ENCODE measurements at regions of chr11 and their contacts with region 1.

Region 1: GRCh38 chr11:108222686-108223448 is at the start of gene ATM:
- DNase-seq: peak; percentile 98
- H3K4me3 Mint-ChIP-seq: no peak within 1 kb of the TSS
- H3K27ac Mint-ChIP-seq: no peak within 1 kb of the TSS
- H3K4me1 Mint-ChIP-seq: peaks cover 37% of the 10 kb centered on the region
- H3K27me3 Mint-ChIP-seq: no peaks in the 10 kb centered on the region
- CTCF ChIP-seq: peak; percentile 57
- total RNA-seq, gene ATM: 70.6 and 73.6 TPM in 2 replicates

Region 2: DNA sequence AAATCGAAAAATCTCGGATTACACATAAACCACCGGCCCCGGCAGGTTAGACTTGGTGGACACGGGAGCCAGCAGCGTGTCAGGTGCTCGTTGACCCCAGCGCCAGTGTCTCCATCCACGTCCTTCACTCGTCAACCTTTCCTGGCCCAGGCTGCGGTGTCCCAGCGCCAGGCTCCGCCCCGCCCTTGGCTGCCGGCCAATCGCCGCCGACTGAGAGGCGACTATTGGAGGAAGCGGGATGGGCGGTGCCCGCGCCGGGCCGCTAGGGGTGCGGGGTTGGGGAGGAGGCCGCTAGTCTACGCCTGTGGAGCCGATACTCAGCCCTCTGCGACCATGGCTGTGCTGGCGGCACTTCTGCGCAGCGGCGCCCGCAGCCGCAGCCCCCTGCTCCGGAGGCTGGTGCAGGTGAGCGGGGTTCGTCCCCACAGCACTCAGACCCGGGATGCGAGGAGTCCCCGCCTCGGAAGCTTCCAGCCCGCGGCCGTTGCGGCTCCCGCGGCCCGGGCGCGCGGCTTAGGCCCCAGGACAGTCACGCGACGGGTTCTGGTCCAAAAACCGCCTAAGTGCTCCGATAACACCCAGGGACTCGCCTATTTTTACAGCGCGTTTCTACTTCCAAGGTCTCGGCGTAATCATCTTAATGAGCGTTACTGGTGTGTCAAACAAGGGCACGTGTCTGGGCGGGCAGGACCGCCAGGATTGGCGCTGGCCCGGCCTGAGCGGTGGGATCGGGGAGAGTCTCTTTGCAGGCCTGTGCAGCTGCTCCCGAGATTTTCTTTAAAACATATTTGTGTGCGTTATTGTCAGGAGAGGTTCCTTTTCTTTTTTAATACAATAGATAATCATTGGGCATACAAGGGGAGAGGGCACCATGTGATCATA is 101.4 kb before region 1 on chr11 and contains the start of gene ACAT1:
- CTCF ChIA-PET with region 1: interaction called, 3 read pairs
- POLR2A ChIA-PET with region 1: interaction called, 22 read pairs
- intact Hi-C with region 1: loop called (anchors 2 kb)
- DNase-seq: peak; percentile 95
- H3K4me3 Mint-ChIP-seq: peak within 1 kb of the TSS; percentile 83
- H3K27ac Mint-ChIP-seq: peak within 1 kb of the TSS; percentile 91
- H3K4me1 Mint-ChIP-seq: peaks cover 38% of the 10 kb centered on the region
- H3K27me3 Mint-ChIP-seq: no peaks in the 10 kb centered on the region
- CTCF ChIP-seq: peak; percentile 7
- total RNA-seq, gene ACAT1: 75.5 and 86.8 TPM in 2 replicates

Region 3: GRCh38 chr11:108199446-108200321 is 23.2 kb before region 1 on chr11:
- CTCF ChIA-PET with region 1: no interaction called
- POLR2A ChIA-PET with region 1: interaction called, 25 read pairs
- intact Hi-C with region 1: no loop called
- DNase-seq: peak; percentile 94
- H3K4me3 Mint-ChIP-seq: peak overlapping the region; percentile 58
- H3K27ac Mint-ChIP-seq: peak overlapping the region; percentile 88
- H3K4me1 Mint-ChIP-seq: peaks cover 23% of the 10 kb centered on the region
- H3K27me3 Mint-ChIP-seq: no peaks in the 10 kb centered on the region
- CTCF ChIP-seq: no peak

Region 4: DNA sequence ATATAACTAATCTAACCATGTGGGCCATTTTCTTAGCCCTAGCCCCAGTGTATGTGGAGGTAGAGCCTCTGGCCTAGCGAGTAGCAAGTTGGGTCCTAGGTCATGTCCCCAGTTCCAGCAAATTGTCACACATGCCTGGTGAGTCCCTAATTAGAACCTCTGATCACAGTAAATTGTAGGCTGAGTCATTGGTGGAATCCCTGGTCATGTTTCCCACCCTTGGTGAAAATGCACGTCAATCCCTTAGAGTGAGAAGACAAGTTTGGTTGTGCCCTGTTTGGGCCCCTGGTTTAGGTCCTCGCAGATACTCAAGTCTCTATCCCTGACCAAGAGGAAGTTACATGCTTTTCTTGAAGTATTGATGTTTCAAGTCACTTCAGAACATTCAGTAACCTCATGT is 46.7 kb after region 1 on chr11:
- CTCF ChIA-PET with region 1: no interaction called
- POLR2A ChIA-PET with region 1: no interaction called
- intact Hi-C with region 1: no loop called
- DNase-seq: no peak
- H3K4me3 Mint-ChIP-seq: no peak overlapping the region
- H3K27ac Mint-ChIP-seq: no peak overlapping the region
- H3K4me1 Mint-ChIP-seq: no peaks in the 10 kb centered on the region
- H3K27me3 Mint-ChIP-seq: no peaks in the 10 kb centered on the region
- CTCF ChIP-seq: no peak

Region 5: GRCh38 chr11:108467091-108467823 is 244.4 kb after region 1 on chr11 and contains the start of gene C11orf65:
- CTCF ChIA-PET with region 1: no interaction called
- POLR2A ChIA-PET with region 1: no interaction called
- intact Hi-C with region 1: loop called (anchors 2 kb)
- DNase-seq: peak; percentile 98
- H3K4me3 Mint-ChIP-seq: peak within 1 kb of the TSS; percentile 93
- H3K27ac Mint-ChIP-seq: peak within 1 kb of the TSS; percentile 100
- H3K4me1 Mint-ChIP-seq: peaks cover 11% of the 10 kb centered on the region
- H3K27me3 Mint-ChIP-seq: no peaks in the 10 kb centered on the region
- CTCF ChIP-seq: no peak
- total RNA-seq, gene C11orf65: 1.4 and 1.5 TPM in 2 replicates

Region 6: DNA sequence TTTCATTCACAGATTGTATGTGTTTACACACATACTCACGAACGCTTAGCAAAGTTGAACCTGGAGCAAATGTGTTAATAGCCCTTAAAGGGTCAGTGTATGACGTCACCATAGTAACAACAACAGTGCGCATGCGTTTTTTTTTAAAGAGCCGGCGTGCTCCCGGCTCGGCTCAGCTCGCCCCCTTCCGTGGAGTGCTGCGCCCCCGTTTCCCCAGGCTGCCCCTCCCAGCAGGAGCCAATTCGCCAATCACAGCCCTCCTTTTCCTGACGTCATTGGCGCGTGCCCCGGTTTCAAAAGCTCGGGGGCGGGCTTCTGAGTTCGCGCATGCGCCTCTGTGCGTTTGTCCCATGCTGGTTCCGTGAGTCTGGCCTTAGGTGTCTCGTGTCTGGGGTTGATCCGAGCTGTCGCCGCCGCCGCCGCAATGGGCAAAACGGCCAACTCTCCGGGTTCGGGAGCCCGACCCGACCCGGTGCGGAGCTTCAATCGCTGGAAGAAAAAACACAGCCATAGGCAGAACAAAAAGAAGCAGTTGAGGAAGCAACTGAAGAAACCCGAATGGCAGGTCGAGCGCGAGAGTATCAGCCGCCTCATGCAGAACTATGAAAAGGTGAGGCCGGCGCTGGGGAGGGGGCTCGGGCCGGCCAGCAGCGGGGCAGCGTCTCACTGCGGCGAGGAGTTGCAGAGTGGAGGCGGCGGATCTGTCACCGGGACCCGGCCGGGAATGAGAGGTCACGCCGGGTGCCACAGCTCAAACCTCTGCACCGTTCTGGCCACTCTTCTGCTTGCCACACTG is 442.1 kb after region 1 on chr11 and contains the start of gene DDX10:
- CTCF ChIA-PET with region 1: interaction called, 4 read pairs
- POLR2A ChIA-PET with region 1: interaction called, 17 read pairs
- intact Hi-C with region 1: no loop called
- DNase-seq: peak; percentile 99
- H3K4me3 Mint-ChIP-seq: peak within 1 kb of the TSS; percentile 91
- H3K27ac Mint-ChIP-seq: peak within 1 kb of the TSS; percentile 91
- H3K4me1 Mint-ChIP-seq: peaks cover 23% of the 10 kb centered on the region
- H3K27me3 Mint-ChIP-seq: no peaks in the 10 kb centered on the region
- CTCF ChIP-seq: no peak
- total RNA-seq, gene DDX10: 94.4 and 113 TPM in 2 replicates

Measured in MCF 10A (cell line).